ENCODE measurements at regions of chr11 and their contacts with region 1.

Region 1: GRCh38 chr11:134275534-134276395 is at the start of gene GLB1L3:
- DNase-seq: peak; percentile 52 to 86 (median 78)
- ATAC-seq: peak; percentile 90 to 91
- H3K4me3 Mint-ChIP-seq: peak within 1 kb of the TSS; percentile 86 to 99 (median 94)
- H3K27ac Mint-ChIP-seq: peak within 1 kb of the TSS; percentile 64 to 95 (median 92)
- H3K4me1 Mint-ChIP-seq: peaks cover 18 to 54% (median 44%) of the 10 kb centered on the region in 4 donors
- H3K27me3 Mint-ChIP-seq: peaks cover 0 to 38% (median 0%) of the 10 kb centered on the region in 5 donors
- polyA plus RNA-seq, gene GLB1L3: 2.0 to 2.5 (median 2.2) TPM

Region 2: DNA sequence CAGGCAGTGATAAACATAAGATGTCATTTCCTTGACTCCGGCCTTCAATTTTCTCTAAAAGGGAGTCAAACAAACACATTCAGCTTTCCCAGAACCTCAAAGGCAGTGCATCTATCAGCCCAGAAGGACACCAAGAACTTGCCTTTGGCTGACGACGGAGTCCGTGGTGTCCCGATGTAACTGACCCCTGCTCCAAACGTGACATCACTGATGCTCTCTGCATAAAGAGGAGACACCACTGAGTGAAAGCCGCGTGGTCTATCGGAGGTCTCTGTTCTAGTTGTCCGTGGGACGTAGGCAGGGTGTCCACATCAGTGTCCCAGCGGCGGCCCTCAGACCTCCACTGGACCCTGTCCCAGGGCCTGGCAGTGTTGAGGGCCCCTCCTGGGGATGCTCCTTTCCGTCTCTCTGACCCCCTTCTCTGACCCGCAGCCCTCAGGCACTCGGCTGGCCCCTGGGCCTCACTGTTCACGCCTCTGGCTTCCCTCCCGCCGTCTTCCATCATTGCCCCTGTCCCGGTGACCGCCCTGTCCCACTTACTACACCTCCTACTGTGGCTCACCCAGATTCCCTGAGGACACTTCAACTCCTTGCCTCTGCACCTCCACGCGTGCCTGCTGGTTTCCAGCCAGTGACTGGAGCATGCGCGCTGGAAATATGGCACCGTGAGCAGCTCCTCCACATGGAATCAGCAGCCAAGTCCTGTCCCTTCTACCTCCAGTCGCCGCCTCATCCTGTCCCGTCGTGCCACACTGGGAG is 122.4 kb before region 1 on chr11:
- POLR2A ChIA-PET with region 1: no interaction called
- DNase-seq: no peak
- ATAC-seq: no peak
- H3K4me3 Mint-ChIP-seq: no peak overlapping the region
- H3K27ac Mint-ChIP-seq: peak overlapping the region in 3 of 10 donors; percentile 63 to 81 (median 70)
- H3K4me1 Mint-ChIP-seq: peaks cover 0 to 3% (median 0%) of the 10 kb centered on the region in 4 donors
- H3K27me3 Mint-ChIP-seq: no peaks in the 10 kb centered on the region

Region 3: GRCh38 chr11:134215836-134216235 is 59.9 kb before region 1 on chr11:
- POLR2A ChIA-PET with region 1: no interaction called
- DNase-seq: no peak
- ATAC-seq: no peak
- H3K4me3 Mint-ChIP-seq: no peak overlapping the region
- H3K27ac Mint-ChIP-seq: no peak overlapping the region
- H3K4me1 Mint-ChIP-seq: peaks cover 19 to 28% (median 23%) of the 10 kb centered on the region in 4 donors
- H3K27me3 Mint-ChIP-seq: no peaks in the 10 kb centered on the region

Region 4: GRCh38 chr11:134253188-134253993 is 22.4 kb before region 1 on chr11 and contains the starts of genes ACAD8 and THYN1:
- POLR2A ChIA-PET with region 1: interaction called, 10 read pairs
- DNase-seq: peak; percentile 90 to 98 (median 96)
- ATAC-seq: peak; percentile 98 to 99
- H3K4me3 Mint-ChIP-seq: peak within 1 kb of the TSS; percentile 91 to 100 (median 96)
- H3K27ac Mint-ChIP-seq: peak within 1 kb of the TSS; percentile 80 to 97 (median 94)
- H3K4me1 Mint-ChIP-seq: peaks cover 18 to 44% (median 40%) of the 10 kb centered on the region in 4 donors
- H3K27me3 Mint-ChIP-seq: no peaks in the 10 kb centered on the region
- polyA plus RNA-seq, gene ACAD8: 21.0 to 24.0 (median 22.6) TPM
- polyA plus RNA-seq, gene THYN1: 172 to 207 (median 197) TPM